H1 (cell line): ENCODE measurements at regions of chr3 and their contacts with region 1.

Region 1: DNA sequence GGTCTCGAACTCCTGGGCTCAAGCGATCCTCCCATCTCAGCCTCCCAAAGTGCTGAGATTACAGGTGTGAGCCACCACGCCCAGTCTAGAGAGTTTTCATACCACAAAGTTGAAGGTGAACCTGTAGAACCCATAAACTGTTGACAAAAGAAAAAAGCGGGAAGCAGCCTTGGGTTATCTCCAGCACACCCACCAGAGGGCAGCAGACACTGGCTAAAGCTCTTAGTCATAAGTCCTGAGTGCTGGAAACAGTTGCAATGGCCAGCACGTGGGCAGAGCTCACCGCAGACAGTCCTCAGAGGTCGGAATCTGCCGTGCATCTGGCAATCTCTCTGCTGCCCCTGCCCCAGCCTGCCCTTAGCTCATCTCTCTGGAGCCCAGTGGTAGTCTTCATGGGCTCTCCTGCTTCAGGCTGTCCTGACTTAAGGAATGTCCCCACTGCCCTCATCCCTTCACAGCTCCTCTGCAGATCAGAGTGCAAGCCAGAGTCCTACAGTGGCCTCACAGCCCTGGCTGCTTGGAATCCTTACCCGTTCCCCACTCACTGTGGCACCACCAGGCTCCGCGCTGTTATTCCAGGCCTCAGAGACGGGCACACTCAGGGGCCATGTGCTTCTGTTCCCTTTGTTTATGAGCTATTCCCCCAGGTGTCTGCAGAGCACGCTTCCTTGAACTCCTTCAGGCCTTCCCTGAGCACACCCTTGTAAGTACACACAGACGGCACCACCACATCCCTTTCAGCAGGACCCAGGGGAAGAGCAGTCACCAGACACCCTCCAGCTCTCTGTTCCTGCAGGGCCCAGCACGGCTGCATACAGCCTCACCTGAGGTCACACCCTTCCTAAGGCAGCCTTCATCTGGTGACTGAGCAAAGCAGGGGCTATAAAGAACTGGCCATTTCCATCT is 8.8 kb upstream of the ELP6 start:
- DNase-seq: peak; percentile 81 to 89
- H3K4me3 ChIP-seq: no peak overlapping the region
- H3K27ac ChIP-seq: no peak overlapping the region
- H3K4me1 ChIP-seq: peaks cover 0 to 11% (median 2%) of the 10 kb centered on the region in 4 experiments; a peak in 4 of 7 replicates
- H3K27me3 ChIP-seq: peaks cover 3 to 14% (median 13%) of the 10 kb centered on the region in 4 experiments
- CTCF ChIP-seq: peak; percentile 71 to 93 (median 88)
- EP300 ChIP-seq: no peak
- POLR2A ChIP-seq: no peak
- RAD21 ChIP-seq: peak; percentile 98 to 99

Region 2: GRCh38 chr3:47291158-47291753 is 231.1 kb before region 1 on chr3:
- CTCF ChIA-PET with region 1: no interaction called
- POLR2A ChIA-PET with region 1: no interaction called
- DNase-seq: no peak
- H3K4me3 ChIP-seq: no peak overlapping the region
- H3K27ac ChIP-seq: no peak overlapping the region
- H3K4me1 ChIP-seq: no peaks in the 10 kb centered on the region; a peak in 1 of 7 replicates
- H3K27me3 ChIP-seq: no peaks in the 10 kb centered on the region
- CTCF ChIP-seq: no peak
- EP300 ChIP-seq: no peak
- POLR2A ChIP-seq: no peak
- RAD21 ChIP-seq: no peak

Region 3: GRCh38 chr3:47536221-47536891 is 14.0 kb after region 1 on chr3:
- CTCF ChIA-PET with region 1: interaction called, 23 read pairs
- POLR2A ChIA-PET with region 1: interaction called, 3 read pairs
- DNase-seq: no peak
- H3K4me3 ChIP-seq: no peak overlapping the region
- H3K27ac ChIP-seq: no peak overlapping the region
- H3K4me1 ChIP-seq: no peaks in the 10 kb centered on the region; a peak in 1 of 7 replicates
- H3K27me3 ChIP-seq: no peaks in the 10 kb centered on the region; a peak in 1 of 7 replicates
- CTCF ChIP-seq: no peak
- EP300 ChIP-seq: no peak
- POLR2A ChIP-seq: no peak
- RAD21 ChIP-seq: no peak

Region 4: DNA sequence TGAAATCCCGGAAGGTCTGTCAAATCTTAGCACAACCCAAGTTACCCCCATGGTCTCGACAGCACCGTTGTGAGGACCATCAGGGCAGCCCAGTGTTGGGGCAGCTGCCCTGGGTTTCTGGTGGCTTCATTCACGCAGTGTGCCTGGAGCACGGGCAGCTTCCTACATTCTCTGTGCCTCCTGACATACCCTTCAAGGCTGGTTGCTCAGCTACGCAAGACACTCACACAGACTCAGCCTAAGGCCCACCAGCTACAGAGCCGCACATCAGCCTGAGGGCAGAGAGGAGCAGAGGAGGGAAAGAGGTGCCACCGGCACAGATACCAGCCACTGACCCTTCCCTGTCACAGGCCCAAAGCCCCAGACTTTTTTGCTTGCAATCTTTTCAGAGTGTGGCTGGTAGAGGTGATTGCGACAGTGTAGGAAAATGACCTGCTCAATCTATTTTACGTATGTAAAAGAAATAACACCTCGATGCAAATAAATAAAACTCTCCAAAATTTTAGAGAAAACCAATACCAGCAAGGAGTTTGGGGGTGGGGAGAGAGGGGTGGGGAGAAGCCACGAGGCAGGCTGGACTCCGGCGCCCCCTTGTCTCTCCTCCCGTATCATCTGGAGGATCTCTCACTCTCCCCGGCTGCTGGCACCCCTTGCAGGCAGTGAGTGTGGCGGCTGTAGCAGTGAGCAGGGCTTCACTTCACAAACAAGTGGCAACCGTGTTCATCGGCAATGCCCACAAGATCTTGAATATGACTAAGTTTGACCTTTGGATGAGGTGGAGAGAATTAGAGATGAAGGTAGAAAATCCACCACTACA is 43.6 kb after region 1 on chr3:
- CTCF ChIA-PET with region 1: interaction called, 34 read pairs
- POLR2A ChIA-PET with region 1: no interaction called
- DNase-seq: no peak
- H3K4me3 ChIP-seq: no peak overlapping the region
- H3K27ac ChIP-seq: no peak overlapping the region
- H3K4me1 ChIP-seq: peaks cover 0 to 3% (median 0%) of the 10 kb centered on the region in 4 experiments; a peak in 1 of 7 replicates
- H3K27me3 ChIP-seq: no peaks in the 10 kb centered on the region
- CTCF ChIP-seq: peak in 2 of 3 experiments; percentile 10 to 28; a peak in 2 of 4 replicates
- EP300 ChIP-seq: no peak
- POLR2A ChIP-seq: no peak
- RAD21 ChIP-seq: peak in 1 of 2 experiments; percentile 21; a peak in 1 of 4 replicates

Region 5: GRCh38 chr3:47578119-47578632 is 55.8 kb after region 1 on chr3:
- CTCF ChIA-PET with region 1: interaction called, 34 read pairs
- POLR2A ChIA-PET with region 1: interaction called, 7 read pairs
- DNase-seq: peak in 1 of 2 experiments; percentile 77
- H3K4me3 ChIP-seq: peak overlapping the region; percentile 33 to 68 (median 40)
- H3K27ac ChIP-seq: no peak overlapping the region
- H3K4me1 ChIP-seq: peaks cover 0 to 11% (median 3%) of the 10 kb centered on the region in 4 experiments; a peak in 4 of 7 replicates
- H3K27me3 ChIP-seq: peaks cover 12 to 34% (median 26%) of the 10 kb centered on the region in 4 experiments
- CTCF ChIP-seq: no peak
- EP300 ChIP-seq: no peak
- POLR2A ChIP-seq: no peak
- RAD21 ChIP-seq: no peak

Region 6: DNA sequence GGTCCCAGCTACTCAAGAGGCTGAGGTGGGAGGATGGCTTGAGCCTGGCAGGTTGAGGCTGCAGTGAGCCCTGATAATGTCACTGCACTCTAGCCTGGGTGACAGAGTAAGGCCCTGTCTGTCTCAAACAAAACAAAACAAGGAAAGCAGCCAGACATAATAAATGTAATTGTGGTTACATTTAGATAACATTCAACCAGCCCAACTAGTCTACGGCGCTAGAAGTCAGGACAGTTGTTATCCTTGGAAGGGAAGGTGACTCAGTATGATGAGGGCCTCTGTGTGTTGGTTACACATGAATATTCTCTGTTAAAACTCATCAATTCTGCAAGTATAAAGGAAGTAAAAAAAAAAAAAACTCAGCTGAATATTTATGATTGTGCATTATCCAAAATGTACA is 83.3 kb after region 1 on chr3:
- CTCF ChIA-PET with region 1: interaction called, 13 read pairs
- POLR2A ChIA-PET with region 1: no interaction called
- DNase-seq: no peak
- H3K4me3 ChIP-seq: no peak overlapping the region
- H3K27ac ChIP-seq: no peak overlapping the region
- H3K4me1 ChIP-seq: no peaks in the 10 kb centered on the region
- H3K27me3 ChIP-seq: no peaks in the 10 kb centered on the region
- CTCF ChIP-seq: no peak
- EP300 ChIP-seq: no peak
- POLR2A ChIP-seq: no peak
- RAD21 ChIP-seq: no peak

Region 7: DNA sequence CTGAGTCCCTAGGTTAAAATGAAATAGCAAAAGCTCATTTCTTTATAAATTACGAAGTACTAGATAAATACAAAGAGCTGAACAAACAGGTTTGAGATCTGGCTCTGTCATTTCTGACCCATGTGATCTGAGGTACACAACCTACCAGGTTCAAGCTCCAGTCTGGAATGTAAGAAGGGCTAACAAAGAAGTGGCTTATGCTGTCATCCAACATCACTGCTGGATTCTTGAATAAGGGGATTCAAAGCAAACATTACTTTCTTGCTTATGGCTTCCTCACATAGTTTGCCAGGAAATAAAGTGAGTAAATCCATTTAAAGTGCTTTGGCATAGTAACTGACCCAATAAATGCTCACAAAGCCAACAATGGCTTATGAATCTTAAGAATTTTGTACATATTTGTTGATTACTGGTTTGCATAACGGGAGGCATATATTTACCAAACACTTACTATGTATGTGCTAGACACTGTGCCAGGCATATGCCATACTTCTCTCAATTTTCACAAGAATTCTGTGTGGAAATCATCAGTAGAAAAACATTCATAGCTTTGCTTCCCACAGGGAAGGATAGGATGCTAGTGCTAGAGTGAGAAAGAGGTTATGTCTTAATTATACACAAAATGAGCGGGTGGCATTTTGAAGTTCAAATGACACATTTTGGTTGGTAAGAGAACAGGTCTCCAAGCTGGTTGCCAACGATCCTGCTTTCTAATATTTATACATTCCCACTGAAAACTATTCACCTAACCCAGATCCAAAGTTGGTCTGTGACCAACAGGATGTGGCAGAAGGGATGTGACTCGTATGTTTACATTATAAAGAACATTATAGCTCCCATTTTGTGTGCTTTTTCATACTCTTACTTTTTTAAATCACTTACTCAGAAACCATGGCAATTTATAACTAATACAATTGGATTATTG is 95.0 kb after region 1 on chr3:
- CTCF ChIA-PET with region 1: interaction called, 15 read pairs
- POLR2A ChIA-PET with region 1: interaction called, 3 read pairs
- DNase-seq: no peak
- H3K4me3 ChIP-seq: no peak overlapping the region
- H3K27ac ChIP-seq: no peak overlapping the region
- H3K4me1 ChIP-seq: no peaks in the 10 kb centered on the region
- H3K27me3 ChIP-seq: no peaks in the 10 kb centered on the region
- CTCF ChIP-seq: no peak
- EP300 ChIP-seq: no peak
- POLR2A ChIP-seq: no peak
- RAD21 ChIP-seq: no peak

Region 8: GRCh38 chr3:47731061-47731460 is 208.7 kb after region 1 on chr3:
- CTCF ChIA-PET with region 1: no interaction called
- POLR2A ChIA-PET with region 1: no interaction called
- DNase-seq: no peak
- H3K4me3 ChIP-seq: no peak overlapping the region
- H3K27ac ChIP-seq: no peak overlapping the region
- H3K4me1 ChIP-seq: no peaks in the 10 kb centered on the region
- H3K27me3 ChIP-seq: no peaks in the 10 kb centered on the region
- CTCF ChIP-seq: no peak
- EP300 ChIP-seq: no peak
- POLR2A ChIP-seq: no peak
- RAD21 ChIP-seq: no peak